Right lobe of liver (tissue), 6 donors: ENCODE measurements at regions of chr20 and their contacts with region 1.

Region 1: GRCh38 chr20:57089691-57090150 is 176.7 kb downstream of the BMP7 start:
- DNase-seq: peak; percentile 71 to 75 (median 74)
- ATAC-seq: peak; percentile 81 to 89 (median 87)
- H3K4me3 ChIP-seq: no peak overlapping the region
- H3K27ac ChIP-seq: no peak overlapping the region
- H3K4me1 ChIP-seq: no peaks in the 10 kb centered on the region
- H3K27me3 ChIP-seq: no peaks in the 10 kb centered on the region
- CTCF ChIP-seq: peak; percentile 89 to 97 (median 91)
- POLR2A ChIP-seq: no peak

Region 2: DNA sequence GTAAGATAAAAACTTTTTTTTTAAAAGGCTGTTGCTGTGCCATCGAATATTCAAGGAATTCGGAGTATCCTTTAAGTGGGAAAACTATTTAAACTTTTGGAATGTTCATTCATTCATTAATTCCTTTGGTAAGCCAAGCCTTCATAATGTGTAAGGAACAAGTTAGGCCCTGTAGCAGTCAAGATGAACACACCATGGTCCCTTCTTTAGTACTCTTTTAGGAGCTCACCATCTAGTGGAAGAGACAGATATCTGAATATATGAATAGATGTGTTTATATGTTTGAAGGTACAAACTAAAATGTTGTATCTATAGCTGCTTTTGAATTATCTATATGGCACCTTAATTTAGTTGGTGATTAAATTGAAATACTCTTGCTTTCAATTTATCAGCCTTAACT is 245.7 kb after region 1 on chr20:
- intact Hi-C with region 1: loop called in 1 of 2 experiments (anchors 5 kb)
- DNase-seq: no peak
- ATAC-seq: no peak
- H3K4me3 ChIP-seq: no peak overlapping the region
- H3K27ac ChIP-seq: no peak overlapping the region
- H3K4me1 ChIP-seq: no peaks in the 10 kb centered on the region
- H3K27me3 ChIP-seq: peaks cover 0 to 9% of the 10 kb centered on the region in 2 donors
- CTCF ChIP-seq: no peak
- POLR2A ChIP-seq: no peak

Region 3: DNA sequence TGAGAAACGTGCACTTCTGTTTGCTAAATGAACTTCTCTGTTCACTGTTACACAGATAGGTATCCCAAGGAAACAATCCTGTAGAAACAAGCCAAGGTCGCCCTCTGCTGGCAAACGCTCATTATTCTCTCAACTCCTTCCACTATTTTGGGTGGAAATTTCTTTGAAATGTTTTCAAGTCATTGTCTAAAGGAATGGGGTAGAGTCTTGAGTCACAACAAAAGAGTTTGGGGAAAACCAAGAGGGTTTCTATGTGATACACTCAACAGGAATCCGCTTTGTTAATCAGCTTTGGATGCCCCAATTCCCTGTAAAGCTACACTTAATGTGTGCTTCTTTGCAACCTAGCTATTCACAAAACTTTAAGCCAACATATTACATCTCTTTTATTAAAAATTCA is 256.8 kb after region 1 on chr20:
- intact Hi-C with region 1: loop called (anchors 5 kb)
- DNase-seq: peak; percentile 65 to 70 (median 69)
- ATAC-seq: peak; percentile 78 to 81 (median 80)
- H3K4me3 ChIP-seq: no peak overlapping the region
- H3K27ac ChIP-seq: no peak overlapping the region
- H3K4me1 ChIP-seq: no peaks in the 10 kb centered on the region
- H3K27me3 ChIP-seq: no peaks in the 10 kb centered on the region
- CTCF ChIP-seq: peak; percentile 68 to 79 (median 74)
- POLR2A ChIP-seq: no peak